Left colon (tissue), 2 donors: ENCODE measurements at regions of chr1 and their contacts with region 1.

Region 1: GRCh38 chr1:152179566-152179965 is 20.5 kb upstream of the RPTN start:
- DNase-seq: no peak
- ATAC-seq: no peak

Region 2: GRCh38 chr1:152880907-152881306 is 701.3 kb after region 1 on chr1:
- intact Hi-C with region 1: loop called in 1 of 2 experiments (anchors 10 kb)
- DNase-seq: no peak
- ATAC-seq: no peak